ENCODE measurements at regions of chrX and their contacts with region 1.

Region 1: GRCh38 chrX:71283403-71284143 is at the start of gene NONO:
- DNase-seq: peak; percentile 87
- ATAC-seq: peak; percentile 95
- total RNA-seq, gene NONO: 120 TPM

Region 2: DNA sequence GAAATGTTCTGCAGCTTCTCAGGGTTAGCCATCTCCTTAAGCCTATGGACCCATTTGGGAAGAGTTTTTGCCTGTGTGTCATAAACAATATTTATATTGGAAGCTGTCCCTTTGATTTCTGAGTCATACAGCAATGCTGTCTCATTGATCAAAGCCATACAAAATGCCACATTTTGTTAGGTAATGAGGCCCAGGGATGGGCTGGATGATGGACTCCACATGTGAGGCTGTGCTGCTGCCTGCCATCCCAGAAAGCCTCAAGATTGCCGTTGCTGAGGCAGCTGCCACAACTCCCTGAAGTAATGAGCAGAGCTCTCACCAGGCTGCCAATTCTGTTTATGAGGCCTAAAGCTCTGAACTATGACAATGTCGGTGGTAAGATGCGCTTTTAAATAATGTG is 72.8 kb before region 1 on chrX:
- intact Hi-C with region 1: no loop called
- DNase-seq: no peak
- ATAC-seq: no peak

Region 3: GRCh38 chrX:71254092-71254941 is 29.3 kb before region 1 on chrX and contains the start of gene ZMYM3:
- intact Hi-C with region 1: loop called (anchors 1 kb)
- DNase-seq: peak; percentile 92
- ATAC-seq: peak; percentile 97
- total RNA-seq, gene ZMYM3: 14.2 TPM

Measured in Right ventricle myocardium inferior (tissue), 1 donor.